Heart left ventricle (tissue), 16 donors: ENCODE measurements at regions of chr9 and their contacts with region 1.

Region 1: GRCh38 chr9:6024020-6024554 is 8.7 kb upstream of the RANBP6 start:
- DNase-seq: no peak
- ATAC-seq: no peak
- H3K4me3 ChIP-seq: no peak overlapping the region
- H3K27ac ChIP-seq: no peak overlapping the region
- H3K4me1 ChIP-seq: no peaks in the 10 kb centered on the region
- H3K27me3 ChIP-seq: peaks cover 0 to 6% (median 0%) of the 10 kb centered on the region in 9 donors
- CTCF ChIP-seq: peak in 11 of 12 donors; percentile 13 to 70 (median 49)
- POLR2A ChIP-seq: no peak

Region 2: DNA sequence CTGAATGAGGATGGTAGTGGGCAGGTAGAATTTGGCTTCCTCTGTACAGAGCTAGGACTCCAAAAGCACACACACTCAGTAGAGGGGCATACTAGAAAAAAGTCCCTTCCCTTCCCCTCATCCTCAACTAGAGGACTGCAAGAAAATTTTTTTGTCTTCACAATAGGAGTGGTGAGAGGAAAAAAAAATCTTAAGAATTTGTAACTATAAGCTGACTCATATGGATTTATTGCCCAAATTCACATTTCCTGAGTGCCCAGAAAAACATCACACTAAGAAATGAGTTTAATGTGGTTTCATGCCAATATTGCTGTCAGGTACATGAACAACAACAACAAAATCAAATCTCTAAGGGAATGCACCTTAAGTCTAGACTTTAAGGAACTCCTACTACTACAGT is 52.3 kb before region 1 on chr9:
- intact Hi-C with region 1: loop called in 1 of 10 experiments (anchors 10 kb)
- DNase-seq: no peak
- ATAC-seq: no peak
- H3K4me3 ChIP-seq: no peak overlapping the region
- H3K27ac ChIP-seq: no peak overlapping the region
- H3K4me1 ChIP-seq: peaks cover 0 to 18% (median 5%) of the 10 kb centered on the region in 12 donors
- H3K27me3 ChIP-seq: no peaks in the 10 kb centered on the region
- CTCF ChIP-seq: no peak
- POLR2A ChIP-seq: no peak

Region 3: GRCh38 chr9:6096821-6097220 is 72.7 kb after region 1 on chr9:
- intact Hi-C with region 1: no loop called
- DNase-seq: no peak
- ATAC-seq: no peak
- H3K4me3 ChIP-seq: no peak overlapping the region
- H3K27ac ChIP-seq: no peak overlapping the region
- H3K4me1 ChIP-seq: no peaks in the 10 kb centered on the region
- H3K27me3 ChIP-seq: no peaks in the 10 kb centered on the region
- CTCF ChIP-seq: no peak
- POLR2A ChIP-seq: no peak